ENCODE measurements at regions of chr6 and their contacts with region 1.

Region 1: GRCh38 chr6:134103006-134103405 is 50.6 kb upstream of the SLC2A12 start:
- DNase-seq: peak in 1 of 2 donors; percentile 73
- H3K4me3 ChIP-seq: no peak overlapping the region
- H3K27ac ChIP-seq: peak overlapping the region; percentile 41 to 61 (median 49)
- H3K4me1 ChIP-seq: peaks cover 0 to 21% (median 7%) of the 10 kb centered on the region in 4 donors
- H3K27me3 ChIP-seq: no peaks in the 10 kb centered on the region
- CTCF ChIP-seq: no peak
- EP300 ChIP-seq: no peak
- POLR2A ChIP-seq: no peak

Region 2: GRCh38 chr6:133360194-133360593 is 742.8 kb before region 1 on chr6:
- intact Hi-C with region 1: no loop called
- DNase-seq: no peak
- H3K4me3 ChIP-seq: no peak overlapping the region
- H3K27ac ChIP-seq: no peak overlapping the region
- H3K4me1 ChIP-seq: no peaks in the 10 kb centered on the region
- H3K27me3 ChIP-seq: no peaks in the 10 kb centered on the region
- CTCF ChIP-seq: no peak
- EP300 ChIP-seq: no peak
- POLR2A ChIP-seq: no peak

Region 3: GRCh38 chr6:133559926-133560325 is 543.1 kb before region 1 on chr6:
- intact Hi-C with region 1: loop called (anchors 5 kb)
- DNase-seq: no peak
- H3K4me3 ChIP-seq: no peak overlapping the region
- H3K27ac ChIP-seq: no peak overlapping the region
- H3K4me1 ChIP-seq: no peaks in the 10 kb centered on the region
- H3K27me3 ChIP-seq: no peaks in the 10 kb centered on the region
- CTCF ChIP-seq: no peak
- EP300 ChIP-seq: no peak
- POLR2A ChIP-seq: no peak

Region 4: GRCh38 chr6:133854364-133855275 is 248.4 kb before region 1 on chr6:
- intact Hi-C with region 1: no loop called
- DNase-seq: peak in 1 of 2 donors; percentile 38
- H3K4me3 ChIP-seq: peak overlapping the region in 2 of 4 donors; percentile 3 to 11
- H3K27ac ChIP-seq: no peak overlapping the region
- H3K4me1 ChIP-seq: peaks cover 0 to 10% (median 7%) of the 10 kb centered on the region in 4 donors
- H3K27me3 ChIP-seq: peaks cover 0 to 55% (median 28%) of the 10 kb centered on the region in 3 donors
- CTCF ChIP-seq: no peak
- EP300 ChIP-seq: no peak
- POLR2A ChIP-seq: no peak

Region 5: DNA sequence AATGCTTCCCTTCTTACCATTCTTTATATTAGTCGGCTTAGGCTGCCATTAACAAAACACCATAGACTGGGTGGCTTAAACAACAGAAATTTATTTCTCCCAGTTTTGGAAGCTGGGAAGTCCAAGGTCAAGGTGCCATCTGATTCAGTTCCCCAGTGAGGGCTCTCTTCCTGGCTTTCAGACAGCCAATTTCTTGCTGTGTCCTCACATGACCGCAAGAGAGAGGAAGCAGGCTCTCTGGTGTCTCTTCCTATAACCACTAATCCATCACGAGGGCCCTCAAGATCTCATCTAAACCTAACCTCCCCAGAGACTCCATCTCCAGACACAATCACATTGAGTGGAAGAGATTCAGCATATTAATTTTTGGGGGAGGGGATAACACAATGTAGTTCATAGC is 407.9 kb after region 1 on chr6:
- intact Hi-C with region 1: no loop called
- DNase-seq: no peak
- H3K4me3 ChIP-seq: no peak overlapping the region
- H3K27ac ChIP-seq: no peak overlapping the region
- H3K4me1 ChIP-seq: peaks cover 0 to 11% (median 0%) of the 10 kb centered on the region in 4 donors
- H3K27me3 ChIP-seq: no peaks in the 10 kb centered on the region
- CTCF ChIP-seq: no peak
- EP300 ChIP-seq: no peak
- POLR2A ChIP-seq: no peak

Measured in stomach (tissue), 19 donors.